ENCODE measurements at regions of chr13 and their contacts with region 1.

Region 1: GRCh38 chr13:96020155-96020575 is 33.0 kb downstream of the UGGT2 start:
- DNase-seq: peak; percentile 69
- ATAC-seq: peak; percentile 85
- H3K4me3 ChIP-seq: no peak overlapping the region
- H3K27ac ChIP-seq: peak overlapping the region; percentile 25; the same call in 1 of the 2 replicates
- H3K4me1 ChIP-seq: peaks cover 17% of the 10 kb centered on the region
- H3K27me3 ChIP-seq: no peaks in the 10 kb centered on the region
- CTCF ChIP-seq: peak; percentile 80

Region 2: DNA sequence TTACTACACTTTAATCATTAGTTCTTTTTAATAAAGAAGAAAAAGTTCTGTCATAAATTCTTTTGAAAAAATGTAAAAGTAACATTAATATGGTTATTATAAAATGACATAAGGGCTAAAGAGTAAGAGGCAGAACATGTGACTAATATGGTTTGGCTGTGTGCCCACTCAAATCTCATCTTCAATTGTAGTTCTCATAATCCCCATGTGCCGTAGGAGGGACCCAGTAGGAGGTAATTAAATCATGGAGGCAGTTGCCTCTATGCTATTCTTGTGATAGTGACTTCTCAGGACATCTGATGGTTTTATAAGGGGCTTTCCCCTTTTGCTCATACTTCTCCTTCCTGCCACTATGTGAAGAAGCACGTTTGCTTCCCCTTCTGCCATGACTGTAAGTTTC is 71.5 kb before region 1 on chr13:
- CTCF ChIA-PET with region 1: no interaction called
- POLR2A ChIA-PET with region 1: no interaction called
- intact Hi-C with region 1: no loop called
- DNase-seq: peak; percentile 29
- ATAC-seq: no peak
- H3K4me3 ChIP-seq: no peak overlapping the region
- H3K27ac ChIP-seq: no peak overlapping the region
- H3K4me1 ChIP-seq: no peaks in the 10 kb centered on the region
- H3K27me3 ChIP-seq: no peaks in the 10 kb centered on the region
- CTCF ChIP-seq: no peak

Region 3: DNA sequence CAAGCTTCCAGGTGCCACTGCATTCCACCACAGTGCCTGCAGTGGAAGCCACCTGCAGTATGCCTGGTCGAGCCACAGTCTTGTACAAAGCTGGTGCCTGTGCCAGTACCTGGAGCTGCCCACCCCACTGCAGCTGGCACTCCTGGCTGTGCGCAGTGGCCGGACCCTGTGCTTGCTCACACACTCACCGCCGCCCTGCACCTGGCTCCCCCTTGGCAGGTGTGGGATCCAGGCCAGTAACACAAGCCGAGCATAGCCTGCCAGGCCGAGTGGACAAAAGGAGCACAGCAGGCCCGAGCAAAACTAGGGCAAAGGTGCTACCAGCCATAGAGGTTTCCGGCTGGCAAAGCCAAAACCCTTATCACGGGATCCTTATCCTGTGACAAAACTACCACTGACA is 14.5 kb after region 1 on chr13:
- CTCF ChIA-PET with region 1: no interaction called
- POLR2A ChIA-PET with region 1: no interaction called
- intact Hi-C with region 1: no loop called
- DNase-seq: no peak
- ATAC-seq: no peak
- H3K4me3 ChIP-seq: no peak overlapping the region
- H3K27ac ChIP-seq: no peak overlapping the region
- H3K4me1 ChIP-seq: peaks cover 27% of the 10 kb centered on the region
- H3K27me3 ChIP-seq: no peaks in the 10 kb centered on the region
- CTCF ChIP-seq: no peak

Region 4: DNA sequence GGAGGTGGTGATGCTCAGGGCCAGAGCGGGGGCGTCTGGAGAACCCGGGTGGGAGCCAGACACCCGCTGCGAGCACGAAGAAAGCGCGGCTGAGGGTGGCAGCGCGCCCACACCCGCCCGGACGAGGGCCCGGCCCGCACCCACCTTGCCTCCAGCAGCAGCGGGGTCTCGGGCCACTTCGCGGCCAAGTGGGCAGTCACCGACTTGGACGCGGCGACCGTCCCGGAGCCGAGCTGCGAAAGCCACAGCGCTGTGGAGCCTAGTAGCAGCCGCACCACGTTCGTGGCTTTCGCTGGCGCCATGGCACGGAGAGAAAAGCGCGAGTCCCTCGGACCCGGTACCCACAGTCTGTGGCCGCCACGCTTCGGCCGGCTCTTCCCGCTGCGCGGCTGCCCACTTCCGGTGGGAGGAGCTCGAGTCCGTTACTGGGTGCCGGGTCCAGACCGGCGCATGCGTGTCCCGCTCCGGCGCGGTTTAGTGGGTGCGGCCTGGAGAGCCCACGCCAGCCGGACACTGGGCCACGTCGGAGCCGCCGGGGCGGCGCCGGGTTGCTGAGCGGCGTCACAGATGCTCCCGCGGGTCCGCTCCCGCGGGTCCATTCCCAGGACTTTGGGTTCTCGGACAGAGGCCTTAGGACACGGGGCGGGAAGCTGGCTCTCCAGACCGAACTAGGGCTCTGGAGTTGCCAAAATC is 33.0 kb after region 1 on chr13 and contains the start of gene UGGT2:
- CTCF ChIA-PET with region 1: interaction called, 3 read pairs
- POLR2A ChIA-PET with region 1: no interaction called
- intact Hi-C with region 1: loop called (anchors 2 kb)
- DNase-seq: peak; percentile 91
- ATAC-seq: peak; percentile 99
- H3K4me3 ChIP-seq: peak within 1 kb of the TSS; percentile 80
- H3K27ac ChIP-seq: peak within 1 kb of the TSS; percentile 83
- H3K4me1 ChIP-seq: no peaks in the 10 kb centered on the region
- H3K27me3 ChIP-seq: no peaks in the 10 kb centered on the region
- CTCF ChIP-seq: no peak
- total RNA-seq, gene UGGT2: 12.2 and 24.3 TPM in 2 replicates

Region 5: GRCh38 chr13:96141027-96141426 is 120.9 kb after region 1 on chr13:
- CTCF ChIA-PET with region 1: interaction called, 5 read pairs
- POLR2A ChIA-PET with region 1: no interaction called
- intact Hi-C with region 1: loop called (anchors 1 kb)
- DNase-seq: peak; percentile 51
- ATAC-seq: peak; percentile 45; the same call in 1 of the 2 replicates
- H3K4me3 ChIP-seq: no peak overlapping the region
- H3K27ac ChIP-seq: no peak overlapping the region
- H3K4me1 ChIP-seq: no peaks in the 10 kb centered on the region
- H3K27me3 ChIP-seq: no peaks in the 10 kb centered on the region
- CTCF ChIP-seq: peak; percentile 43

Region 6: DNA sequence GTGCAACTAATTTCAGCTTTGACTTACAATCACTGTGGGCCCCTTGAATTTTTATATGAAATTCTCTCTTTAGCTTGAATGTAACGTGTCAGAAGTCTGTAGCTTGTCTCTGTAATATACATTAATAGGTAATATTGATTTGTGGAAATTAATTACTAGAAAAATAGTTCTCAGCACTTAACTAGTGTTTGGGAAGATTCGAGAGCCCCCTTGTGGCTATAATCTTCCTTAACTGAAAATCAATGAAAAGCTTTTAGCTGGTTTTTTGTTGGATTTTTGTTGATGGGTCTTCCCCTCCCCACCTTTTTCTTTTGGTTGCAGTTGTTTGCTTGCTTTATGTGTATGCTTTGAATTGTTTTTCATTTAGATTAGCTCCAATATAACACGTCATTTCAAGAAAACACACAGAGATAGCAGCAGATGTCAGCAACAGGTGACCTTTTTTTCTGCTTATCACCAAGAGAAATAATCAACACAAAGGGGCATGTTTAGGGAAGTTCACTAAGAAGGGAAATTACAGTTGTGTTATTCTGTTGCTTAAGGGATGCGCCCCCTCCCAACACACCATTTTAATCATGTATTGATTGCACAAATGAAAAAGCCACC is 797.3 kb after region 1 on chr13:
- CTCF ChIA-PET with region 1: interaction called, 18 read pairs
- POLR2A ChIA-PET with region 1: no interaction called
- intact Hi-C with region 1: loop called (anchors 1 kb)
- DNase-seq: peak; percentile 50
- ATAC-seq: no peak
- H3K4me3 ChIP-seq: no peak overlapping the region
- H3K27ac ChIP-seq: no peak overlapping the region
- H3K4me1 ChIP-seq: no peaks in the 10 kb centered on the region
- H3K27me3 ChIP-seq: no peaks in the 10 kb centered on the region
- CTCF ChIP-seq: peak; percentile 69

Region 7: DNA sequence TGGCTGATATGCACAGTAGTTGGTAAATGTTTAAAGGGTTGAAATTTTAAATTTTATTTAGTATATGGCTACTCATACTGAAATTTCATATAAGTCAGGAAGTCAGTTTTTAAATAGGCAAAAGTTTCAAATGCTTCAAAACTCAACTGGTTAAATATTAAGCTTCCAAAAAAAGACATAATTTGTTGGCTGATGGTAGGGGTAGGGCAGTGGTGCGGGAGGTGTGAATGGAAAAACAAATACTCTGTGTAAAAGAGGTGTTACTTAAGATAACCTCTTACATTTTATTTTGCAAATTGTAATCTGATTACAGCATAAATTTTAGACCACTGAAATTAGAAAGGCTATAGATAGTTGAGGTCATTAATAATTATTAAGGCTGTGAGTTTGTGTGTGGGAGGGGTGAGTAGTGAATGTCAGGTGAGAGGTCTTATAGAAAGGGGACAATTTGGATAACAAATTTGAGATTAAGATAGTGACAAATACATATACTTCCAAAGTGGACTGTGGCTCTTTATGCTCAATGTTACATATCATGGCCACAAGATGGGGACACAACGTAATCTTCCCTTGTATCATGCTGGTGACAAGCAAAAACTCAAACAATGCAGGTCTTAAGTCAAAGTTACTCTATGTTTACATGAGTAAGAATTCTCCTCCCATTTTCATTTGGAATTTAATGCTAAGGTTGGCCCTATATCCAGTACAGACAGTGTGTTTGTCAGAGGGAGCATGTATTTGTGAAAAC is 1010.7 kb after region 1 on chr13:
- CTCF ChIA-PET with region 1: no interaction called
- POLR2A ChIA-PET with region 1: no interaction called
- intact Hi-C with region 1: loop called (anchors 5 kb)
- DNase-seq: peak; percentile 60
- ATAC-seq: peak; percentile 68
- H3K4me3 ChIP-seq: no peak overlapping the region
- H3K27ac ChIP-seq: no peak overlapping the region
- H3K4me1 ChIP-seq: no peaks in the 10 kb centered on the region; the same call in 1 of the 2 replicates
- H3K27me3 ChIP-seq: no peaks in the 10 kb centered on the region
- CTCF ChIP-seq: peak; percentile 58